ENCODE measurements at regions of chr20 and their contacts with region 1.

Region 1: DNA sequence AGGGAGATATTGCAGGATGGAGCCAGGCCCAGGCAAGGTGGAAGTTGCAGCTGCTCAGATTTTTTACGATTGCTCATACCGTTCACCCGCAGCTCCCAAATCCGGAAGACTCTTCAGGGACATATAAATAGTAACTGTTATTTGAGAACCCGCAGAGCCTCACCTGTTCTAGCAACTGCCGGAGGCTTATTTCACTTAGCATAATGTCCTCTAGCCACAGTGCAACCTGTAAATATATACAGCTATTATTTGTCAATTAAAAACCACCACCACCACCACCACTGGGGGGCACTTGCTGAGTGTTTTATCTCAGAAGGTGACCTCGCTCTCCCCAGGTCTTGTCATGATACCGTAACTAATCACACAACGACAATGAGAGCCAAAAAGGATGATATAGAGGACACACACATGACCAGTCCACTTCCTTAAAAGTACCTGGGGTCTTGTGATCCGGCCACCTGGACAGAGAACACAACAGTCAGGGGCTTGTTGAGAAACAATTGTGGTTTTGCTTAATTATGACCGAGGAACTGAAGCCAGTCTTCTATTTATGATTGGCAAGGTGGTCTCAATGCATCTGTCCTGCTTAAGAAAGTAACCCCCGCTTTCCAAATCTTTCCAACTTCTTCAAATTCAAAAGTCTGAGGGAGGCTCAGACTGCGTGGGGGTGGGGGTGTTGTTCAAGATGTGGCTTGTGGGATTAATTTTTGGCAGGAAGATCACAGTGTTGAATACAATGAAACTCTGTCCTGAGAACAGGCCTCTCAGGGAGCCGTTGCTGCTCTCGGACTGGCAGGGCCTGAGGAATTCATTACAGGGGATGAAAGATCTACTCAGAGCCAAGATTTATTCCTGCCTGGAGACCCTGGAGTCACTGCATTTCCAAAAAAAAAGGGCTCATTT is 107.7 kb upstream of the PRND start:
- DNase-seq: peak; percentile 78
- H3K4me3 Mint-ChIP-seq: no peak overlapping the region
- H3K27ac Mint-ChIP-seq: no peak overlapping the region
- H3K4me1 Mint-ChIP-seq: peaks cover 5% of the 10 kb centered on the region
- H3K27me3 Mint-ChIP-seq: peaks cover 38% of the 10 kb centered on the region

Region 2: GRCh38 chr20:4720041-4720976 is 106.3 kb after region 1 on chr20:
- CTCF ChIA-PET with region 1: interaction called, 20 read pairs
- DNase-seq: peak; percentile 82
- H3K4me3 Mint-ChIP-seq: no peak overlapping the region
- H3K27ac Mint-ChIP-seq: no peak overlapping the region
- H3K4me1 Mint-ChIP-seq: peaks cover 7% of the 10 kb centered on the region
- H3K27me3 Mint-ChIP-seq: peaks cover 16% of the 10 kb centered on the region

Region 3: GRCh38 chr20:4726710-4727397 is 112.9 kb after region 1 on chr20:
- CTCF ChIA-PET with region 1: interaction called, 18 read pairs
- DNase-seq: peak; percentile 69
- H3K4me3 Mint-ChIP-seq: peak overlapping the region; percentile 50
- H3K27ac Mint-ChIP-seq: peak overlapping the region; percentile 35
- H3K4me1 Mint-ChIP-seq: peaks cover 16% of the 10 kb centered on the region
- H3K27me3 Mint-ChIP-seq: peaks cover 5% of the 10 kb centered on the region

Measured in activated naive CD4-positive, alpha-beta T cell treated with anti-CD3 and anti-CD28 coated beads, Interleukin-2, amount 10 ng/mL, durations not matched to agents 7 days and 5 days (primary cell).